CD8-positive, alpha-beta T cell (primary cell): ENCODE measurements at regions of chr3 and their contacts with region 1.

Region 1: GRCh38 chr3:177597311-177598096 is 400.2 kb upstream of the TBL1XR1 start:
- DNase-seq: peak in 7 of 9 experiments; percentile 13 to 77 (median 26)
- ATAC-seq: peak; percentile 87
- H3K4me3 ChIP-seq: peak overlapping the region; percentile 0 to 8
- H3K4me3 Mint-ChIP-seq: peak overlapping the region; percentile 76
- H3K27ac ChIP-seq: peak overlapping the region; percentile 44 to 82
- H3K27ac Mint-ChIP-seq: peak overlapping the region; percentile 95
- H3K4me1 ChIP-seq: peaks cover 52% of the 10 kb centered on the region
- H3K4me1 Mint-ChIP-seq: peaks cover 84% of the 10 kb centered on the region
- H3K27me3 ChIP-seq: no peaks in the 10 kb centered on the region
- H3K27me3 Mint-ChIP-seq: no peaks in the 10 kb centered on the region
- CTCF ChIP-seq: no peak

Region 2: DNA sequence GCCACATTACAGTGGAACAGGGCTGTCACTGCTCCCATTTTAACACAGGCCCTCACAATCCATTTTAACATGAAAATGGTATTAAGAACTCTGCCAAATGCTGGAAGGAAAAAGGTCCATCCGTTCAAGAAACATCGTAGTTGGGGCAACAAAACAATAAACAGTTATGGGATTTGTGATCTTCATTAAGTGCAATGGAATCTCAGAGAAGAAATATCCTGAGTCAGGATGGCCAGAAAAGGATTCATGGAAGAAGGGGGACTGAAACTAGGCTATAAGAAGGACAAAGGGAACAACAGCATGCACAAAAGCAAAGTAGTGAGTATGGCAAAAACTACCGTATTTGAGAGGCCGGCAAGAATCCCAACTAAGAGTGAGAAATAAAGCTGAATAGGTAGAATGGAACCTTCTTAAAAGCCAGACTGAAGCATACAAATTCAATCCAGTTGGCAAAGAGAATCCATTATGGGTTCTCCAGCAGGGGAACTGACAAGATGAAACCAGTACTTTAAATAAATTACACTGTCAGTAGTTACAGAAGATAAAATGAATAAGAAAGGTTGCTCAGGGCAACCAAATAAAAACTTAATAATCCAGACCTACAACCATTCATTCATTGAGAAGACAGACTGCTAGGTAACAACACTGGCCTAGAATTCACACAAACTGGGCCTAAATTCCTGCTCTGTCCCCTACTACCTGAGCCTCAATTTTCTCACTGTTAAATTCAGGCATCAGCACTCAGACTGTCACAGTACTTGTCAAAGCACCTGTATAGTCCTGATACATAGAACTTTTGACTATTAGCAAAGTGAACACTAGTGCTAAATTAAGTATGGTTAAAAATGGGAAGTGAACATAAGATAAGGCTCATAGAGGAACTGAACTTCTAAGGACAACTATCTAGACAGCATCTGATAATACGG is 406.5 kb before region 1 on chr3:
- CTCF ChIA-PET with region 1: no interaction called
- POLR2A ChIA-PET with region 1: no interaction called
- intact Hi-C with region 1: loop called (anchors 5 kb)
- DNase-seq: no peak
- ATAC-seq: no peak
- H3K4me3 ChIP-seq: no peak overlapping the region
- H3K4me3 Mint-ChIP-seq: peak overlapping the region; percentile 26
- H3K27ac ChIP-seq: no peak overlapping the region
- H3K27ac Mint-ChIP-seq: peak overlapping the region; percentile 70
- H3K4me1 ChIP-seq: peaks cover 50% of the 10 kb centered on the region
- H3K4me1 Mint-ChIP-seq: peaks cover 68% of the 10 kb centered on the region
- H3K27me3 ChIP-seq: no peaks in the 10 kb centered on the region
- H3K27me3 Mint-ChIP-seq: no peaks in the 10 kb centered on the region
- CTCF ChIP-seq: no peak

Region 3: GRCh38 chr3:177538750-177539730 is 58.5 kb before region 1 on chr3:
- CTCF ChIA-PET with region 1: no interaction called
- POLR2A ChIA-PET with region 1: interaction called, 8 read pairs
- intact Hi-C with region 1: loop called in 1 of 2 experiments (anchors 10 kb)
- DNase-seq: peak in 3 of 9 experiments; percentile 9 to 67 (median 48)
- ATAC-seq: peak; percentile 49
- H3K4me3 ChIP-seq: peak overlapping the region; percentile 13 to 30
- H3K4me3 Mint-ChIP-seq: peak overlapping the region; percentile 75
- H3K27ac ChIP-seq: peak overlapping the region; percentile 29 to 62
- H3K27ac Mint-ChIP-seq: peak overlapping the region; percentile 86
- H3K4me1 ChIP-seq: peaks cover 28% of the 10 kb centered on the region
- H3K4me1 Mint-ChIP-seq: peaks cover 57% of the 10 kb centered on the region
- H3K27me3 ChIP-seq: no peaks in the 10 kb centered on the region
- H3K27me3 Mint-ChIP-seq: no peaks in the 10 kb centered on the region
- CTCF ChIP-seq: no peak

Region 4: GRCh38 chr3:177554895-177555759 is 42.4 kb before region 1 on chr3:
- CTCF ChIA-PET with region 1: interaction called, 4 read pairs
- POLR2A ChIA-PET with region 1: no interaction called
- intact Hi-C with region 1: loop called in 1 of 2 experiments (anchors 5 kb)
- DNase-seq: peak in 2 of 9 experiments; percentile 8 to 23
- ATAC-seq: no peak
- H3K4me3 ChIP-seq: no peak overlapping the region
- H3K4me3 Mint-ChIP-seq: no peak overlapping the region
- H3K27ac ChIP-seq: peak overlapping the region in 1 of 2 experiments; percentile 32
- H3K27ac Mint-ChIP-seq: peak overlapping the region; percentile 62
- H3K4me1 ChIP-seq: peaks cover 26% of the 10 kb centered on the region
- H3K4me1 Mint-ChIP-seq: peaks cover 65% of the 10 kb centered on the region
- H3K27me3 ChIP-seq: no peaks in the 10 kb centered on the region
- H3K27me3 Mint-ChIP-seq: no peaks in the 10 kb centered on the region
- CTCF ChIP-seq: no peak

Region 5: DNA sequence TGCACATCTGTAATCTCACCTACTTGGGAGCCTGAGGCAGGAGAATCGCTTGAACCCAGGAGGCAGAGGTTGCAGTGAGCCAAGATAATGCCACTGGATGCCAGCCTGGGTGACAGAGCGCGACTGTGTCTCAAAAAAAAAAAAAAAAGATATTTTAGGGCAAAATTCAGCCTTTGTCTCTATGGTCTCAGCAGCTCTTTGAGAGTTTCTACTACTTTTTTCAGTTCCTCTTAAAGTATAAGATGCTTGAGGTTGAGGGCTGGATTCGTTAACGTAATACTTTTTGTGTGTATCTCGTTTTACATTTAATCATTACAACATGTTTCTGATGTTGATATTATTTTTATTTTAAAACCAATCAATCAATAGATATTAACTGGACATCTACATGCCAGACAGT is 19.0 kb before region 1 on chr3:
- CTCF ChIA-PET with region 1: interaction called, 3 read pairs
- POLR2A ChIA-PET with region 1: interaction called, 3 read pairs
- intact Hi-C with region 1: loop called in 1 of 2 experiments (anchors 2 kb)
- DNase-seq: no peak
- ATAC-seq: no peak
- H3K4me3 ChIP-seq: no peak overlapping the region
- H3K4me3 Mint-ChIP-seq: no peak overlapping the region
- H3K27ac ChIP-seq: no peak overlapping the region
- H3K27ac Mint-ChIP-seq: no peak overlapping the region
- H3K4me1 ChIP-seq: no peaks in the 10 kb centered on the region
- H3K4me1 Mint-ChIP-seq: no peaks in the 10 kb centered on the region
- H3K27me3 ChIP-seq: no peaks in the 10 kb centered on the region
- H3K27me3 Mint-ChIP-seq: no peaks in the 10 kb centered on the region
- CTCF ChIP-seq: no peak

Region 6: GRCh38 chr3:177640319-177640997 is 43.0 kb after region 1 on chr3:
- CTCF ChIA-PET with region 1: interaction called, 3 read pairs
- POLR2A ChIA-PET with region 1: interaction called, 5 read pairs
- intact Hi-C with region 1: loop called in 1 of 2 experiments (anchors 5 kb)
- DNase-seq: peak in 2 of 9 experiments; percentile 20 to 22
- ATAC-seq: no peak
- H3K4me3 ChIP-seq: no peak overlapping the region
- H3K4me3 Mint-ChIP-seq: no peak overlapping the region
- H3K27ac ChIP-seq: peak overlapping the region in 1 of 2 experiments; percentile 29
- H3K27ac Mint-ChIP-seq: peak overlapping the region; percentile 69
- H3K4me1 ChIP-seq: peaks cover 40% of the 10 kb centered on the region
- H3K4me1 Mint-ChIP-seq: peaks cover 51% of the 10 kb centered on the region
- H3K27me3 ChIP-seq: no peaks in the 10 kb centered on the region
- H3K27me3 Mint-ChIP-seq: no peaks in the 10 kb centered on the region
- CTCF ChIP-seq: no peak

Region 7: GRCh38 chr3:177652556-177653291 is 55.2 kb after region 1 on chr3:
- CTCF ChIA-PET with region 1: no interaction called
- POLR2A ChIA-PET with region 1: no interaction called
- intact Hi-C with region 1: no loop called
- DNase-seq: peak in 2 of 9 experiments; percentile 26 to 37
- ATAC-seq: peak; percentile 23
- H3K4me3 ChIP-seq: no peak overlapping the region
- H3K4me3 Mint-ChIP-seq: no peak overlapping the region
- H3K27ac ChIP-seq: no peak overlapping the region
- H3K27ac Mint-ChIP-seq: peak overlapping the region; percentile 28
- H3K4me1 ChIP-seq: peaks cover 12% of the 10 kb centered on the region
- H3K4me1 Mint-ChIP-seq: peaks cover 35% of the 10 kb centered on the region
- H3K27me3 ChIP-seq: no peaks in the 10 kb centered on the region
- H3K27me3 Mint-ChIP-seq: no peaks in the 10 kb centered on the region
- CTCF ChIP-seq: no peak